Thyroid gland (tissue), 4 donors: ENCODE measurements at regions of chr1 and their contacts with region 1.

Region 1: GRCh38 chr1:84781946-84782771 is 91.9 kb upstream of the SSX2IP start:
- DNase-seq: peak; percentile 78 to 85
- H3K4me3 ChIP-seq: no peak overlapping the region
- H3K27ac ChIP-seq: no peak overlapping the region
- H3K4me1 ChIP-seq: no peaks in the 10 kb centered on the region
- H3K27me3 ChIP-seq: no peaks in the 10 kb centered on the region
- CTCF ChIP-seq: peak in 5 of 6 experiments; percentile 42 to 89 (median 63)
- POLR2A ChIP-seq: no peak

Region 2: GRCh38 chr1:84753516-84754385 is 28.4 kb before region 1 on chr1:
- intact Hi-C with region 1: no loop called
- DNase-seq: peak; percentile 70 to 72
- H3K4me3 ChIP-seq: no peak overlapping the region
- H3K27ac ChIP-seq: no peak overlapping the region
- H3K4me1 ChIP-seq: no peaks in the 10 kb centered on the region
- H3K27me3 ChIP-seq: no peaks in the 10 kb centered on the region
- CTCF ChIP-seq: peak; percentile 83 to 95 (median 90)
- POLR2A ChIP-seq: no peak

Region 3: DNA sequence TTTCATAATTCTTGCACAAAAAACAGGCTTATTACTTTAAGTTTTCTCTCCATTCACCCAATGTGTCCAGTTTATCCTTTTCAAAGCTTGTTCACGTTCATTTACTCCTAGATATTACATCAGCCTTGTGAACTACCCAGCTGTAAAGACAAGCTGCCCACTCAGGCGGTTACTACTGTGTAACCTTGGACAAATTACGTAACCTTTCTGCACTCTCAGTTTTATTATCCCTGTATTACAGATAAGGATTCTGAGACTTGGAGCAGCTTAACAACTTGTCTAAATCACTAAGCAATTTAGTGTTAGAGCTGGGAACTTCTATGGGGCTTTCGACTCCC is 131.4 kb after region 1 on chr1:
- intact Hi-C with region 1: no loop called
- DNase-seq: peak; percentile 67 to 69
- H3K4me3 ChIP-seq: no peak overlapping the region
- H3K27ac ChIP-seq: no peak overlapping the region
- H3K4me1 ChIP-seq: no peaks in the 10 kb centered on the region
- H3K27me3 ChIP-seq: no peaks in the 10 kb centered on the region
- CTCF ChIP-seq: no peak
- POLR2A ChIP-seq: no peak

Region 4: GRCh38 chr1:84936116-84936810 is 154.1 kb after region 1 on chr1:
- intact Hi-C with region 1: loop called (anchors 10 kb)
- DNase-seq: peak; percentile 14 to 25
- H3K4me3 ChIP-seq: no peak overlapping the region
- H3K27ac ChIP-seq: no peak overlapping the region
- H3K4me1 ChIP-seq: no peaks in the 10 kb centered on the region
- H3K27me3 ChIP-seq: no peaks in the 10 kb centered on the region
- CTCF ChIP-seq: peak; percentile 59 to 95 (median 91)
- POLR2A ChIP-seq: no peak